GM12878 (cell line): ENCODE measurements at regions of chr17 and their contacts with region 1.

Region 1: DNA sequence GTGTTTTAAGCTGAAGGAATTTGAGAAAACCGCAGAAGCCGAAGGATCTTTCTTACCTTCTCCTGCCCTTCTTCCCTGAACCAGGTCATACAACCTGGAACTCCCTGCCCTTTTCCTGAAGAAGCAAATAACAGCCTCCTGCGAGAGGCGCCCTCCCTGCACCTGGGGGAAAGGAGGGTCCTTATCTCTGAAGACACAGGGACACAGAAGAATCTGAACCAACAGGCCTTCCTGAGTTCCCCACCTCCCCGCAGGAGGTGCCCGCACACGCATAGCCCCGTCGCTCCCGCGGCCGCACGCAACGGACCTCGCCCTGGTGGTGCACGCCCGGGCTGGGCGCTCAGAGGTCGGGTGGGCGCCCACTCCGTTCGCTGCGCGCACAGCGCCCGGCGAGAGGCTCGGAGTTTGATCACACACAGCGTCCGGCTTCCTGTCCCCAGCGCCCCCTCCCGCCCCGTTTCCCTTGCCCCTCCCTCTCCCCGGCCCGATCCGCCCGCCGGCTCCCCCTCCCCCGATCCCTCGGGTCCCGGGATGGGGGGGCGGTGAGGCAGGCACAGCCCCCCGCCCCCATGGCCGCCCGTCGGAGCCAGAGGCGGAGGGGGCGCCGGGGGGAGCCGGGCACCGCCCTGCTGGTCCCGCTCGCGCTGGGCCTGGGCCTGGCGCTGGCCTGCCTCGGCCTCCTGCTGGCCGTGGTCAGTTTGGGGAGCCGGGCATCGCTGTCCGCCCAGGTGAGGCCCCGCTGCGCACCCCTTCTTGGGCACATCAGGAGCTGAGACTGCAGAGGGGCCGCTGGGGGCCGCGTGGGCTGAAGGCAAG is at the start of gene TNFSF12:
- DNase-seq: no peak
- ATAC-seq: peak; percentile 73
- H3K4me3 ChIP-seq: peak within 1 kb of the TSS; percentile 70
- H3K27ac ChIP-seq: no peak within 1 kb of the TSS
- H3K4me1 ChIP-seq: peaks cover 28% of the 10 kb centered on the region
- H3K27me3 ChIP-seq: no peaks in the 10 kb centered on the region; a peak in 1 of 4 replicates
- CTCF ChIP-seq: peak in 1 of 3 experiments; percentile 9; a peak in 1 of 6 replicates
- EP300 ChIP-seq: no peak
- POLR2A ChIP-seq: peak; percentile 74
- RAD21 ChIP-seq: no peak
- polyA plus RNA-seq, gene TNFSF12: 0.32 to 0.53 TPM

Region 2: GRCh38 chr17:7523033-7523432 is 25.8 kb before region 1 on chr17:
- CTCF ChIA-PET with region 1: interaction called, 10 read pairs
- POLR2A ChIA-PET with region 1: interaction called, 5 read pairs
- RAD21 ChIA-PET with region 1: interaction called, 3 read pairs
- SMC1A ChIA-PET with region 1: interaction called, 3 read pairs
- in situ Hi-C with region 1: no loop called
- intact Hi-C with region 1: no loop called
- DNase-seq: no peak
- ATAC-seq: peak; percentile 83
- H3K4me3 ChIP-seq: no peak overlapping the region
- H3K27ac ChIP-seq: no peak overlapping the region
- H3K4me1 ChIP-seq: no peaks in the 10 kb centered on the region
- H3K27me3 ChIP-seq: no peaks in the 10 kb centered on the region
- CTCF ChIP-seq: peak; percentile 38 to 62 (median 62)
- EP300 ChIP-seq: no peak
- POLR2A ChIP-seq: no peak
- RAD21 ChIP-seq: peak; percentile 39; the same call in 1 of the 2 replicates

Region 3: DNA sequence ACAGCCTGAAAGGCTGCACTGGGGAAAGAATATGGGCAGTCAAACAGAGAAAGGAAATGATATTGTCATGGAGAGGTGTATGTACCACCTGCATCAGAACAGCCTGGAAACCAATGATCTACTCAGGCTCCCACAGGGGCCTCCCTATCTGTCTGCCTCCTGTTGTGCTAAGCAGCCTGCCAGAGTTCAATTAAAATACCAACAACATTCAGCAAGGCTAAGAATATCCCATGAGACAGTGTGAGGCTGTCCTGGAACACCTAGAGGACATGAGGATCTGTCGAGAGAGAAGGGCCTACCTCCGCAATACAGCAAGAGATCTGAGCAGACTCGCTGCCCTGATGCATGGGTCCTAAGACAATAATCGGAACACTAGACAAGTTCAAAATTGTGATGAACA is 57.5 kb after region 1 on chr17:
- CTCF ChIA-PET with region 1: no interaction called
- POLR2A ChIA-PET with region 1: no interaction called
- RAD21 ChIA-PET with region 1: no interaction called
- SMC1A ChIA-PET with region 1: no interaction called
- in situ Hi-C with region 1: no loop called
- intact Hi-C with region 1: no loop called
- DNase-seq: no peak
- ATAC-seq: no peak
- H3K4me3 ChIP-seq: no peak overlapping the region
- H3K27ac ChIP-seq: no peak overlapping the region
- H3K4me1 ChIP-seq: no peaks in the 10 kb centered on the region
- H3K27me3 ChIP-seq: no peaks in the 10 kb centered on the region
- CTCF ChIP-seq: no peak
- EP300 ChIP-seq: no peak
- POLR2A ChIP-seq: no peak
- RAD21 ChIP-seq: no peak

Region 4: GRCh38 chr17:7763919-7764318 is 215.1 kb after region 1 on chr17:
- CTCF ChIA-PET with region 1: no interaction called
- POLR2A ChIA-PET with region 1: no interaction called
- RAD21 ChIA-PET with region 1: no interaction called
- SMC1A ChIA-PET with region 1: no interaction called
- in situ Hi-C with region 1: no loop called
- intact Hi-C with region 1: no loop called
- DNase-seq: no peak
- ATAC-seq: no peak
- H3K4me3 ChIP-seq: no peak overlapping the region
- H3K27ac ChIP-seq: no peak overlapping the region
- H3K4me1 ChIP-seq: no peaks in the 10 kb centered on the region
- H3K27me3 ChIP-seq: peaks cover 0 to 2% of the 10 kb centered on the region in 2 experiments; a peak in 1 of 4 replicates
- CTCF ChIP-seq: no peak
- EP300 ChIP-seq: no peak
- POLR2A ChIP-seq: no peak
- RAD21 ChIP-seq: no peak